Right lobe of liver (tissue), 6 donors: ENCODE measurements at regions of chr15 and their contacts with region 1.

Region 1: DNA sequence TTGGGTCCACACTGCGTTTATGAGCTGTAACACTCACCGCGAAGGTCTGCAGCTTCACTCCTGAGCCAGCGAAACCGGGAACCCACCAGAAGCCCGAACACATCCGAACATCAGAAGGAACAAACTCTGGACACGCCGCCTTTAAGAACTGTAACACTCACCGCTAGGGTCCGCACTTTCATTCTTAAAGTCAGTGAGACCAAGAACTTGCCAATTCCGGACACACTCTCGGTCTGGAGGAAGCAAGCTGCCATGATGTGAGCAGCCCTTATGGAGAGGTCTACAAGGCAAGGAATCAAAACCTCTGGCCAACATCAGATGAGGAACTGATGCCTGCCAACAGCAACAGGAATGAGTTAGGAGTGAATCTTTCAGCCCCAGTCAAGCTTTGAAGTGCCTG is 62.9 kb downstream of the SLC28A2 start:
- DNase-seq: no peak
- ATAC-seq: peak in 2 of 4 donors; percentile 33 to 37
- H3K4me3 ChIP-seq: no peak overlapping the region
- H3K27ac ChIP-seq: no peak overlapping the region
- H3K4me1 ChIP-seq: peaks cover 0 to 10% (median 0%) of the 10 kb centered on the region in 4 donors
- H3K27me3 ChIP-seq: no peaks in the 10 kb centered on the region
- CTCF ChIP-seq: peak in 3 of 4 donors; percentile 8 to 22 (median 21)
- POLR2A ChIP-seq: no peak

Region 2: GRCh38 chr15:45399381-45400212 is 84.6 kb after region 1 on chr15:
- intact Hi-C with region 1: loop called in 1 of 2 experiments (anchors 10 kb)
- DNase-seq: no peak
- ATAC-seq: peak; percentile 34 to 49 (median 37)
- H3K4me3 ChIP-seq: no peak overlapping the region
- H3K27ac ChIP-seq: no peak overlapping the region
- H3K4me1 ChIP-seq: peaks cover 0 to 38% (median 13%) of the 10 kb centered on the region in 4 donors
- H3K27me3 ChIP-seq: no peaks in the 10 kb centered on the region
- CTCF ChIP-seq: peak; percentile 77 to 89 (median 80)
- POLR2A ChIP-seq: no peak